Right cardiac atrium (tissue), 5 donors: ENCODE measurements at regions of chr15 and their contacts with region 1.

Region 1: DNA sequence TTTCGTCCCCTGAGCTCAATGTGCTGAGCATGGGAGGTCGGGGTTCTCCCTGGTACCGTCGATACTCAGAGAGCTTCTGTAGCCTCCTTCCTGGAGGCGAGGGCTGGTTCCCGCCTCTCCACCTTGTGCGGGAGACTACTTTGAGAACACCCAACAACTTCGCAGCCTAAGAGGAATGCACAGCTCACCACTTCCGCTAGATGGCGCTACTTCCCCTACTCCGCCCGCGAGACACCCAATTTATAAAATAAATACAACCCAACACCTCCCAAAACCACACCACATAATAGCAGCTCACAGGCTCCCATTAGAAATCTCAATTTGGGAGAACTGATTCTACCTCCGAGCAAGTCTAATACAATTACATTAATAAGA is 1.2 kb downstream of the RGMA start:
- DNase-seq: peak; percentile 64 to 90 (median 83)
- ATAC-seq: peak; percentile 71 to 78
- H3K4me3 ChIP-seq: peak overlapping the region; percentile 89
- H3K27ac ChIP-seq: no peak overlapping the region
- H3K4me1 ChIP-seq: no peaks in the 10 kb centered on the region
- H3K27me3 ChIP-seq: no peaks in the 10 kb centered on the region

Region 2: DNA sequence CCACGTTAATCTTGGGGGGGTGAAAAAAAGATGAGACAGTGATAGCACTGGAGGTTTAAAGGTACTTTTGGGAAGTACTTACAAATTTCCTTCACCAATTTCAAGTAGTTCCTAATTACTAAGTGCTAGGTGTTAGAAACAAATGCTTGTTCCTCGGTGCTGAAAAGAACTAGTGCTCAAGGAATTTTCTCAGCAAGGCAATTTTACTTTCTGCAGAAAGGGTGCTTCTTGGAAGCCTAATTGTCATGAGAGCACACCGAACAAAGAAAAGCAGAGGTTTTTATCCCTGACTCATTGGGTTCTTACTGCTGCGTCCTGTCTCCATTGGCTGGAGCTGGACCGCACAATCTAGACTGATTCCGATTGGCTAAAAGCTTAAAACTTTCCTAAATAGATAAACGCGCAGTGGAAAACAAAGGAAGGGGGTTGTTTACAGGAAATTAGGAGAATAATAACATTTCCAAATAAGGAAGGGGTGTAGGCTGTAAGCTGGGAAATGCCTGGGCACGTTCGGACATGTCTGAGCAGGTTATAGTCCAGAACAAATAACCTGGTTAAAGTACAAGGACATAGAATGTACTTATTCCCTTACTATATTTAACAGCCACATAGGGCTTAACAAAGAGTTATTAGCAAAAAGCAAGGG is 138.1 kb before region 1 on chr15:
- intact Hi-C with region 1: no loop called
- DNase-seq: no peak
- ATAC-seq: no peak
- H3K4me3 ChIP-seq: no peak overlapping the region
- H3K27ac ChIP-seq: no peak overlapping the region
- H3K4me1 ChIP-seq: no peaks in the 10 kb centered on the region
- H3K27me3 ChIP-seq: no peaks in the 10 kb centered on the region

Region 3: DNA sequence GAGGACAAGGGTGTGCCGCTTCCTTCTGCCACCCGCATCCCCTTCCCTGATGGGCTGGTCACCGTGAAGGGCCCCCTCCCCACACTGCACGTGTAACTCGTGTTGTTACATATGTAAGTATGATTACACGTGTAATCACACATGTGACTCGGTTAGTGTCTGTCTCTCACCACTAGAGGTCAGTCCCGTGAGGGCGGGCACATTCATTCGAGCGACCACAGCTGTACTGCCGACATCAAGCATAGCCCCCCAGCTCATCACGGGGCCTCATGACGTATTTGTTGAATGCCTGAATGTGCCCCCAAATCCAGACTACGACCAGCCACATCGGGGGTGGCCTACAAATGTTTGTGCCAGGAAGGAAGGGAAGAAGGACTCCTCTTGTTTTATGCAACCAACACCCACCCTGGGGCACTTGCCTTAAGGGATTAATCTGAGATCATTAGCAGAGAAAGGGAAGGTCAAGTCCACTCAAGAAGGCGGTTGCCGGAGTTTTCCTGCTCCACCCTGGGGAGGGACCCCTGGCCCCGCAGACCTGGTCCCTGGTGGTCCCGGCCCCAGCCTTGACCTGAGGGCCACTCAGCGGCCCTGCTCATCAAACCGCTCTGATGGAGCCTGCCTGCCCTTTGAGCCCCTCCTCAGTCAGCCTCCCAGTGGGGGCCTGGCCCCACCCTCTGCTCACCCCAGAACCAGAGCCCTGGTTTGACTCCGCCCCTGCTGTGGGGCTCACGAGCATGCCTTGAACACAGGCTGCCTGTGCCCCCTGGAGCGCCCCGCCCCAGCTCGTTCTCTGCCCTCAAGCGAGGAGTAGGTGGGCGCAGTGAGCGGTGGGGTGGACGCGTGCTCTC is 51.6 kb before region 1 on chr15:
- intact Hi-C with region 1: loop called in 1 of 4 experiments (anchors 5 kb)
- DNase-seq: peak in 2 of 3 donors; percentile 39 to 77
- ATAC-seq: peak; percentile 10 to 22
- H3K4me3 ChIP-seq: no peak overlapping the region
- H3K27ac ChIP-seq: no peak overlapping the region
- H3K4me1 ChIP-seq: no peaks in the 10 kb centered on the region
- H3K27me3 ChIP-seq: no peaks in the 10 kb centered on the region

Region 4: DNA sequence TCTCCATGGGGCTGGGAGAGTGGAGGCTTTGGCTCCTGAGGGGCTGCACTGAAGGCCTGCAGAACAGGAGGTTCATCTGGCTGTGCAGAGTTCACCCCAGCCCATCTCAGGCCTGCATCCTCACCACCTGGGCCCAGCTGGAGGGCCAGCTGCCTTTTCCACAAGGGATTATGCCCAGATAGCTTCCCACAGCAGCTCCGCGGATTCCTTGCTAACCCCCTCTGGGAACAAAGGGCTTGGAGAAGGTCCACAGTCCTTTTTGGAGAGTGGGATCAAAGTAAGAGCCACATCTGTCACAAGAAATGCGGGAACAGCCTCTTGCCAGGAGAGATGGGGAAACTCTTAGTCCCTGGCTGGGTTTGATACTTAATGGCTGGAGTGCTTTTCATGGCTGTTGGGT is 165.9 kb after region 1 on chr15:
- intact Hi-C with region 1: no loop called
- DNase-seq: no peak
- ATAC-seq: no peak
- H3K4me3 ChIP-seq: no peak overlapping the region
- H3K27ac ChIP-seq: no peak overlapping the region
- H3K4me1 ChIP-seq: peaks cover 2% of the 10 kb centered on the region
- H3K27me3 ChIP-seq: no peaks in the 10 kb centered on the region

Region 5: DNA sequence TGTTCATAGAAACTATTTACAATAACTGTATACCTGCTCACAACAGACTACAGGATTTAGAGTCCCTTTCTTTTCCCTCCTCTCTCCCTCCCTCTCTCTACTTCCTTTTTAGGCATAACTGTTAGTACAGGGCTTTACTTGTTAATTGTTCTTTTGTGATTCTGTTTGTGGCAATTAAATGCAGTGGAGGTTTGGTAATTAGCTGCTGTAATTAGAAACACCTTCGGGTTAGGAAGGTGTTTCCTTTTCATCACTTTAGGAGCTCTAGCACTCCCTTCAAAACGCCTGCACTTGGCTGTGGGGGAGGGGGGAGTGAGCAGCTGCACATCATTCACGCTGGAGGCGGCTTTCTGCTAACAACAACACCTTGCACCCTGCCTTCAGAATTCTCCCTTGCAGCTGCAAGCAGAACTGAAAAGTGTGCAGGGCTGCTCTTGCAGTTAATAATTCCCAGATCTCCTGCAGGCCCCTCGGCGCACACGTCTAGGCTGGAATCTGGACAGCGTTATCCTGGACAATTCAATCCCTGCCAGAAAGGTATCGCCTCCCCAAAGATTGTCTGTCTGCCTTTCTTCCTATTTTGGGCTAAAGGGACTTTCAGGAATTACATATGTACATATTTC is 243.8 kb after region 1 on chr15:
- intact Hi-C with region 1: loop called in 1 of 4 experiments (anchors 10 kb)
- DNase-seq: no peak
- ATAC-seq: no peak
- H3K4me3 ChIP-seq: no peak overlapping the region
- H3K27ac ChIP-seq: no peak overlapping the region
- H3K4me1 ChIP-seq: no peaks in the 10 kb centered on the region
- H3K27me3 ChIP-seq: peaks cover 3% of the 10 kb centered on the region